CD4-positive, alpha-beta T cell (primary cell): ENCODE measurements at regions of chr4 and their contacts with region 1.

Region 1: DNA sequence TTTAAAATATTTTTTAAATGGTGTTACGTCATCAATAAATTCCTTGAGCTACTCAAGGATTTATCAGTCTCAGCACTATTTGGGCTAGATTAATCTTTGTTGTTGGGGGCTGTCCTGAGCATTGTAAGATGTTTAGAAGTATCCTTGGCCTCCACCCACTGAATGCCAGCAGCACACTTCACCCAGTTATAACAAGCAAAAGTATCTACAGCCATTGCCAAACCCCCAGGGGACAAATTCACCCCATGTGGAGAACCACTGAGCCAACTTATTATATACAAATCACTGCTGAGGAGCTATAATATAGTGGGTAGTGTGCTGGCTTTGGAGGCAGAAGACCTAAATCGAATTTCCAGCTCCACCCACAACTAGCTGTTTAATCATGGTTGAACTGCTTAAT is 58.3 kb downstream of the ATP10D start:
- DNase-seq: no peak
- ATAC-seq: no peak
- H3K4me3 ChIP-seq: no peak overlapping the region
- H3K4me3 Mint-ChIP-seq: no peak overlapping the region
- H3K27ac ChIP-seq: no peak overlapping the region
- H3K27ac Mint-ChIP-seq: no peak overlapping the region
- H3K4me1 ChIP-seq: no peaks in the 10 kb centered on the region
- H3K4me1 Mint-ChIP-seq: no peaks in the 10 kb centered on the region
- H3K27me3 ChIP-seq: no peaks in the 10 kb centered on the region
- H3K27me3 Mint-ChIP-seq: no peaks in the 10 kb centered on the region
- CTCF ChIP-seq: no peak

Region 2: GRCh38 chr4:47106561-47106960 is 436.8 kb before region 1 on chr4:
- CTCF ChIA-PET with region 1: no interaction called
- POLR2A ChIA-PET with region 1: no interaction called
- intact Hi-C with region 1: no loop called
- DNase-seq: no peak
- ATAC-seq: no peak
- H3K4me3 ChIP-seq: no peak overlapping the region
- H3K4me3 Mint-ChIP-seq: no peak overlapping the region
- H3K27ac ChIP-seq: no peak overlapping the region
- H3K27ac Mint-ChIP-seq: no peak overlapping the region
- H3K4me1 ChIP-seq: no peaks in the 10 kb centered on the region
- H3K4me1 Mint-ChIP-seq: no peaks in the 10 kb centered on the region
- H3K27me3 ChIP-seq: no peaks in the 10 kb centered on the region
- H3K27me3 Mint-ChIP-seq: peaks cover 8% of the 10 kb centered on the region
- CTCF ChIP-seq: no peak

Region 3: GRCh38 chr4:47490550-47490949 is 52.8 kb before region 1 on chr4:
- CTCF ChIA-PET with region 1: no interaction called
- POLR2A ChIA-PET with region 1: no interaction called
- intact Hi-C with region 1: no loop called
- DNase-seq: peak in 4 of 14 experiments; percentile 13 to 49 (median 35)
- ATAC-seq: peak; percentile 71
- H3K4me3 ChIP-seq: no peak overlapping the region
- H3K4me3 Mint-ChIP-seq: no peak overlapping the region
- H3K27ac ChIP-seq: no peak overlapping the region
- H3K27ac Mint-ChIP-seq: no peak overlapping the region
- H3K4me1 ChIP-seq: peaks cover 2% of the 10 kb centered on the region
- H3K4me1 Mint-ChIP-seq: peaks cover 8% of the 10 kb centered on the region
- H3K27me3 ChIP-seq: no peaks in the 10 kb centered on the region
- H3K27me3 Mint-ChIP-seq: no peaks in the 10 kb centered on the region
- CTCF ChIP-seq: no peak

Region 4: DNA sequence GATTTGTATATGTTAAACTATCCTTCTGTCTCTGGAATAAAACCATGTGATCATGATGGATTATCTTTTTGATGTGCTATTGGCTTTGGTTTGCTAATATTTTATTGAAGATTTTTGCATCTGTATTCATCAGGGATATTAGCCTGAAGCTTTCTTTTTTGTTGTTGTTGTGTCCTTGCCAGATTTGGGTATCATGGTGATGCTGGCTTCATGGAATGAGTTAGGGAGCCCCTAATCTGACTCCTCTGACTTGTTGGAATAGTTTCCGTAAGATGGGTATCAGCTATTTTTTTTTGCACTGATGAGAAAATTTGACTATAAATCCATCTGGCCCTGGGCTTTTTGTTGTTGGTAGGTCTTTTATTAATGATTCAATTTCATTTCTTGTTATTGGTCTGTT is 12.5 kb before region 1 on chr4:
- CTCF ChIA-PET with region 1: no interaction called
- POLR2A ChIA-PET with region 1: no interaction called
- intact Hi-C with region 1: loop called in 1 of 2 experiments (anchors 1 kb)
- DNase-seq: no peak
- ATAC-seq: no peak
- H3K4me3 ChIP-seq: no peak overlapping the region
- H3K4me3 Mint-ChIP-seq: no peak overlapping the region
- H3K27ac ChIP-seq: no peak overlapping the region
- H3K27ac Mint-ChIP-seq: peak overlapping the region; percentile 46
- H3K4me1 ChIP-seq: peaks cover 21% of the 10 kb centered on the region
- H3K4me1 Mint-ChIP-seq: peaks cover 46% of the 10 kb centered on the region
- H3K27me3 ChIP-seq: no peaks in the 10 kb centered on the region
- H3K27me3 Mint-ChIP-seq: no peaks in the 10 kb centered on the region
- CTCF ChIP-seq: no peak